Posterior cingulate gyrus (tissue), 11 donors: ENCODE measurements at regions of chr7 and their contacts with region 1.

Region 1: GRCh38 chr7:21253740-21254687 is 173.9 kb upstream of the SP4 start:
- DNase-seq: peak in 7 of 10 donors; percentile 37 to 89 (median 57)

Region 2: GRCh38 chr7:20778063-20778721 is 475.8 kb before region 1 on chr7:
- intact Hi-C with region 1: loop called (anchors 1 kb)
- DNase-seq: peak in 7 of 10 donors; percentile 31 to 92 (median 59)

Region 3: GRCh38 chr7:21215307-21215706 is 38.7 kb before region 1 on chr7:
- intact Hi-C with region 1: no loop called
- DNase-seq: no peak

Region 4: DNA sequence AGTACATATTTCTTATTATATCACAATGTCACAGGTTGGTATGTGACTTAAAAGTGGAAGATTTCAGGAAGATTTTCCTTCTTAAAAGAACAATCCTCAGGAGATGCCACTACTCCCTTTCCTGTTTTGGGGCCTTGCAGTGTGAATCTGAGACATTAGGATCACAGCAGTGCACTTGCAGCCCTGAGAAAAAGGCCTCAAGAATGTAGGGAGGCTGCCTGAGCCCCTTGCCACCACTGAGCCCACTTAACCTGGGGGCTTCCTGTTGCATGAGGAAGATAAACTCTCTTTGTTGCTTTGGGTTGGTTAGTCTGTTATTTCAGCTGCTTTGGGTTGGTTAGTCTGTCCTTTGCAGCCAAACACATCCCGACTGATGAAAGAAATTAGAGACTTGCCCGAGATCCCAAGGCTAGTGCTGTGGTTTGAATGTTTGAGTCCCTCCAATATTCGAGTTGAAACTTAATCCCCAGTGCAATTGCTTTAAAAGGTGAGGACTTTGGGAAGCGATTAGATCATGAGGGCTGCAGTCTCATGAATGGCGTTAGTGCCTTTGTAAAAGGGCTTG is 22.5 kb after region 1 on chr7:
- intact Hi-C with region 1: no loop called
- DNase-seq: peak in 1 of 10 donors; percentile 24

Region 5: DNA sequence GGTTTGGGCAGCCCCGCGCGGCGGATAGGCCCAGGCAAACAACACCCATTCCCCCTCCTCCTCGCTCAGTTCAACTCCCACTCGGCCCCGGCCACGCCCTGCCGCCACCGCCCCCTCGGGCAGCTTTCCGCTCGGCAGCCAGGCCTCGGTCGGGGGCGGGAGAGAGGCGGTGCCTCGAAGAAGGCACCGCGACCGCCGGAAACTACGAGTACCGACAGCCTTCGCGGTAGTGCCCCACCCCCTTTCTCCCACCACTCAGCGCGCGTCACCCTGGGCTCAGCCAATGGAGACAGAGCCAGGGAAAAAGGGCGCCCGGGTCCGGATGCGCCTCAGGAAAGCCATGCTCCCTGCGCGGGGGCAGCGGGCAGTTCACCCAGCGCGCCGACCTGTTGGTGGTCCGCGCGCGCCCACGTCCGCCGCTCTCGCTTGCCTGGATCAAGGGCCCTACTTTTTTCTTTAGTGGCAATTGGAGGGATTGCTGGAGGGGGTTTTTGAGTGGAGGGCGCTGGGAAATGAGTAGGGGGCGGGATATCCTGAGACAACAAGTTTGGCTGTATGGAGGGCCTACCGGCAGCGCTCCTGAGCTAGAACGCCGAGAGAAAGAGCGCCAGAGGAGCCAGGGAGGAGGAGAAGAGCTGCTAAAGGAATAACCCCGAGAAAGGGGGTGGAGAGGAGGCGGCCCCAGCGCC is 173.3 kb after region 1 on chr7:
- intact Hi-C with region 1: loop called (anchors 5 kb)
- DNase-seq: peak; percentile 98 to 100 (median 99)

Region 6: GRCh38 chr7:21507626-21508343 is 253.8 kb after region 1 on chr7:
- intact Hi-C with region 1: loop called (anchors 1 kb)
- DNase-seq: peak in 5 of 10 donors; percentile 19 to 59 (median 51)

Region 7: DNA sequence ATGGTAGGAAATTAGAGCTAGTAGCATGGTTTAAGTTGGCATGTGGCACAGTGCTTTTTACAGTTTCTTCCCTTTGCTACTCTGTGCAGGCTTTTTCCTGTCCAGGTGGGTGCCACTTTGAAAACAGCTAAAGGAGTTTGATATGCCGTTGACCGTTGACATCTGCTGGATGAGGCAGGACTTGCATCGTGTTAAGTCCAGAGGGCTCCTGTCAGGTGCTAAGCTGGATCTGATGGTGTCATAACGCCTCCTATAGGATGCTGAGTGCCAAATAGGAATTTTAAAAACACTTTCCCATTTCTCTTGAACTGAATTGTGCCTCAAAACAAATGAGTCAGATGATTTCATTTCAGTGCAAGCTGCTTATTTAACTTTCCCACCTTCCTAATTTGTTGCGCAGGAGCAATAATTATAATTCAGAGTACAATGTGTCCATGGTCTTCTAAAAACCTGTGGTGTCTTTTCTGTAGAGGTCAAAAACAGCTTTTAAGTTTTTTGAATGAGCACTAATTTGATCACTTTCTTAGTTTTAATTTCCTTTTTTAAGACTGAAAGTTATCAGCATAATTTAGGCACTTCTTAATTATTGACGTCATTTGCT is 513.4 kb after region 1 on chr7:
- intact Hi-C with region 1: loop called (anchors 5 kb)
- DNase-seq: peak in 5 of 10 donors; percentile 7 to 84 (median 27)

Region 8: DNA sequence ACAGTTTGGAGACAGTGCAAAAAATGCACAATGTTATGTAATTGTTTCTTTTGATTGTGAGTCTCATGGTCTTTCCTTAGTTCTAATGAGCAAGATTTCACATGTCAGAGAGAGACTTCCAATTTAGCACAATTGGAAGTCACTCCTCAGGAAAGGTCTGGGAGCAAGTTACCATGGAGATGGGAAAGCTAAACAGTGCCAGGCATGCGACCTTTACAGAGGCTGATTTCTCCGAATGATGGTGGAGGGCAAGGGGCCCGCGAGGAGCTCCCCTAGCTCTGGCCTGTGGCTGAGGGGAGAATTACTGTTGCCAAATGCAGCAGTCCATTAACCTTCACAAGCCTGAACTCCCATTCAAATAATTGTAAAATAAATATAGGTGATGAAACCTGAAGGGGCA is 632.4 kb after region 1 on chr7:
- intact Hi-C with region 1: no loop called
- DNase-seq: no peak

Region 9: GRCh38 chr7:22082886-22083703 is 829.1 kb after region 1 on chr7:
- intact Hi-C with region 1: loop called (anchors 5 kb)
- DNase-seq: peak; percentile 87 to 99 (median 95)

Region 10: GRCh38 chr7:22499044-22499443 is 1245.0 kb after region 1 on chr7:
- intact Hi-C with region 1: loop called (anchors 5 kb)
- DNase-seq: peak in 1 of 10 donors; percentile 17